ENCODE measurements at regions of chr7 and their contacts with region 1.

Region 1: GRCh38 chr7:128830231-128831177 is at the start of gene FLNC:
- DNase-seq: peak in 1 of 2 donors; percentile 82
- H3K4me3 ChIP-seq: peak within 1 kb of the TSS; percentile 71 to 88
- H3K27ac ChIP-seq: peak within 1 kb of the TSS; percentile 92 to 95
- H3K4me1 ChIP-seq: peaks cover 11 to 37% of the 10 kb centered on the region in 2 donors
- H3K27me3 ChIP-seq: no peaks in the 10 kb centered on the region
- CTCF ChIP-seq: no peak
- total RNA-seq, gene FLNC: 117 TPM

Region 2: GRCh38 chr7:128236924-128237586 is 593.4 kb before region 1 on chr7:
- intact Hi-C with region 1: no loop called
- DNase-seq: no peak
- H3K4me3 ChIP-seq: no peak overlapping the region
- H3K27ac ChIP-seq: no peak overlapping the region
- H3K4me1 ChIP-seq: no peaks in the 10 kb centered on the region
- H3K27me3 ChIP-seq: peaks cover 7% of the 10 kb centered on the region
- CTCF ChIP-seq: no peak

Region 3: DNA sequence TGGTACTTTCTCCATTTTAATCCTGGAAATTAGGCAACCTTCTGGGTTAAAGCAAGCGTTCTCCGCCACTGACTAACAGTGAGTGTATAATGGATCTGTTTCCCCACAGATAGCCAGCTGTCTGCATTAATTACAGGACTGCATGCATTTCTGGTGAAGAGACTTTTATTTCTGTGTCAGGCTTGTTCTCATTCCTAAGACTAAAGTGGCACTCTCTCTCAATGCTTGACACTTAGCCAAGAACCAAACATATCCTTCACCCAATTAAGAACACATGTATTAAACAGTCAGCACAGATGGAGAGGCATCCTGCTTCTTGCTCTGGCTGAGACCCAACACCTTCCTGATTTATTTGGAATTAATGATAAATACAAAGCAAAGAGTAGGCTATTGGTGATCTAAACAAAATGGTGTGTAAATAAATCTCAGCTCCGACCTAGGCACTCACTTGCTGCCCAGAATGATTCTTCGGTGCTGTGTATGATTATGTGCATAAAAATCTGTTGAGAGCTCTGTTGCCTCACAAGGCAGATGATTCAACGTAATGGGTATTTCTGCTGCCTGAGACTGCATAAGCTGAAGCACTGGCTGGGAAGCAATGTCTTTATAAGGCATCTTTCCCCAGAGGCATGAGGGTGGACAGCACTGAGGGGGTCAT is 74.6 kb before region 1 on chr7:
- intact Hi-C with region 1: loop called (anchors 5 kb)
- DNase-seq: peak in 1 of 2 donors; percentile 77
- H3K4me3 ChIP-seq: no peak overlapping the region
- H3K27ac ChIP-seq: peak overlapping the region; percentile 39 to 64
- H3K4me1 ChIP-seq: peaks cover 6 to 15% of the 10 kb centered on the region in 2 donors
- H3K27me3 ChIP-seq: no peaks in the 10 kb centered on the region
- CTCF ChIP-seq: no peak

Region 4: DNA sequence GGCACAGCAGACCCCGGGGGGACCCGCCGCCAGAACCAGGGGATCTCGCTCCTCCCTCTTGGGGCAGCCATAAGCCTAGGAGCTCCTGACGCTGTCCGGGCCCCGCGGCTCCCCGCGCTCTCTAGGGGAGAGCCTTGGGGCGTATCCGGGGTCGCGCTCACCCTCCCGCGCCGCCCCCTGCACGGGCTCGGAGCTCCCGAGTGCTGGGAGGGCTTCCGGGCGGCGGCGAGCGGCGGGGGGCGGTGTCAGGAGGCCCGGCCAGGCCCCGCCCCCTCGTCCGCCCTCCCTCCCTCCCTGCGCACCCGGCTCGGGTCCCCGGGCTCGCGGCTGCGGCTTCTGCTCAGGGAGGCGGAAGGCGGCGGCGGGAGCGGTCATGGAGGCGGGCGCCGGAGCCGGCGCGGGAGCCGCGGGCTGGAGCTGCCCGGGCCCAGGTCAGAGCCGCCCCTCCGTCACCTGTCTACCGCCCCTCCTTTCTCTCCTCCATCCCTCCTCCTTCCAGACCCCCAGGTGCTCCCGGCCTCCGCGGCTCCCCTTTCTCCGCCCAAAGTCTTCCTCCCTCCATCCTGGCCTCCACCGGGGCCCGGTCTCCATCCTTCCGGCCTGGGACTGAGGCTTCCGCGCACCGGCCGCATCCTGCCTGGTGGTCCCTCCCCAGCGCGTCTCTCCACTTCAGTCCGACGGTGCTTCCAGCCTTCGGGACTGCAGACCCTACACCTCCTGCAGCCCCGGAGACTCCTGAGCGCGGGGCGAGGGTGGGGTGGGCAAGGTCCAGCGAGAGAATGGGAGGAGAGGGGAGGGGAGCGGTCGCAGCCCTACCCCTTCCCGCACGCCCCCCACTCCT is 39.2 kb before region 1 on chr7:
- intact Hi-C with region 1: loop called (anchors 2 kb)
- DNase-seq: peak; percentile 17 to 86
- H3K4me3 ChIP-seq: peak overlapping the region; percentile 74 to 89
- H3K27ac ChIP-seq: peak overlapping the region; percentile 55 to 78
- H3K4me1 ChIP-seq: peaks cover 7 to 12% of the 10 kb centered on the region in 2 donors
- H3K27me3 ChIP-seq: no peaks in the 10 kb centered on the region
- CTCF ChIP-seq: no peak

Region 5: GRCh38 chr7:128862571-128863432 is 32.3 kb after region 1 on chr7 and contains the start of gene ATP6V1F:
- intact Hi-C with region 1: loop called (anchors 2 kb)
- DNase-seq: peak; percentile 94 to 99
- H3K4me3 ChIP-seq: peak within 1 kb of the TSS; percentile 73 to 79
- H3K27ac ChIP-seq: peak within 1 kb of the TSS; percentile 60 to 63
- H3K4me1 ChIP-seq: peaks cover 12 to 38% of the 10 kb centered on the region in 2 donors
- H3K27me3 ChIP-seq: no peaks in the 10 kb centered on the region
- CTCF ChIP-seq: no peak
- total RNA-seq, gene ATP6V1F: 142 TPM

Measured in ascending aorta (tissue), 2 donors.